ENCODE measurements at regions of chr11 and their contacts with region 1.

Region 1: GRCh38 chr11:130002846-130003716 is 446 bp upstream of the PRDM10 start:
- DNase-seq: peak; percentile 97
- H3K4me3 Mint-ChIP-seq: peak overlapping the region; percentile 97
- H3K27ac Mint-ChIP-seq: peak overlapping the region; percentile 100
- H3K4me1 Mint-ChIP-seq: peaks cover 12% of the 10 kb centered on the region
- H3K27me3 Mint-ChIP-seq: no peaks in the 10 kb centered on the region
- CTCF ChIP-seq: no peak

Region 2: DNA sequence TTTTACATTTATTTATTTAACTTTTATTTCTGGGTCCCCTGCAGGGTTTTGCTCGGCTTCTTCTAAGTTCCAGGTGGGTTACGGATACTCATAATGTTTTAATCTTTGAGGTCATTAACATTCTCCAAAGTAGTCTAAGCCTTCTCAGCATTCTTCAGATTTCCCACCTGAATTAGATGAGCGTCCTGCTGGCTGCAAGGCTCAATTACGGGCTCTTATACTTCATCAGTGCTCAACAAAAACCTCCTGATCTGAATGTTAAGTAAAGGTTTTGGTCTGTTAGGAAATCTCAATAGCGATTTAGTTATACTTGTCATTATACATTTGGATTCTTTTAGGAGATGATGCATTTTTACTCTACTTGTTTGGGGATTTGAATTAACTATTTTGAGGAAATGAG is 80.4 kb before region 1 on chr11:
- CTCF ChIA-PET with region 1: interaction called, 3 read pairs
- POLR2A ChIA-PET with region 1: no interaction called
- intact Hi-C with region 1: loop called (anchors 1 kb)
- DNase-seq: no peak
- H3K4me3 Mint-ChIP-seq: no peak overlapping the region
- H3K27ac Mint-ChIP-seq: no peak overlapping the region
- H3K4me1 Mint-ChIP-seq: peaks cover 5% of the 10 kb centered on the region
- H3K27me3 Mint-ChIP-seq: no peaks in the 10 kb centered on the region
- CTCF ChIP-seq: no peak

Region 3: DNA sequence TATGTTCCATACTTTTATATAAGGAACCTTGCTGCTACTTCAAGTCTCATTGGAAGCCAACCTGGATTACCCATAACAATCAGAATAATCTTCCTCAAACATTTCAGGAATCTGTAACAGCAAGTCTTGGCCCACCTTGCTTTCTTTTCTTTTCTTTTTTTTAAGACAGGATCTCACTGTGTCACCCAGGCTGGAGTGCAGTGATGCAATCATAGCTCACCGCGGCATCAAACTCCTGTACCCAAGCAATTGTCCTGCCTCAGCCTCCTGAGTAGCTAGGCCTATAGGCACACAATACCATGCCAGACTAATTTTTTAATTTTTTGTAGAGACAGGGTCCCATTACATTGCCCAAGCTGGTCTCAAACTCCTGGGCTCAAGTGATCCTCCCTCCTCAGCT is 28.9 kb after region 1 on chr11:
- CTCF ChIA-PET with region 1: interaction called, 4 read pairs
- POLR2A ChIA-PET with region 1: interaction called, 48 read pairs
- intact Hi-C with region 1: loop called (anchors 1 kb)
- DNase-seq: no peak
- H3K4me3 Mint-ChIP-seq: no peak overlapping the region
- H3K27ac Mint-ChIP-seq: peak overlapping the region; percentile 51
- H3K4me1 Mint-ChIP-seq: peaks cover 11% of the 10 kb centered on the region
- H3K27me3 Mint-ChIP-seq: no peaks in the 10 kb centered on the region
- CTCF ChIP-seq: no peak

Region 4: GRCh38 chr11:130069684-130070108 is 66.6 kb after region 1 on chr11 and contains the start of gene APLP2:
- CTCF ChIA-PET with region 1: interaction called, 24 read pairs
- POLR2A ChIA-PET with region 1: interaction called, 186 read pairs
- intact Hi-C with region 1: loop called (anchors 1 kb)
- DNase-seq: peak; percentile 99
- H3K4me3 Mint-ChIP-seq: peak within 1 kb of the TSS; percentile 85
- H3K27ac Mint-ChIP-seq: peak within 1 kb of the TSS; percentile 92
- H3K4me1 Mint-ChIP-seq: peaks cover 25% of the 10 kb centered on the region
- H3K27me3 Mint-ChIP-seq: no peaks in the 10 kb centered on the region
- CTCF ChIP-seq: no peak
- total RNA-seq, gene APLP2: 317 and 368 TPM in 2 replicates

Region 5: DNA sequence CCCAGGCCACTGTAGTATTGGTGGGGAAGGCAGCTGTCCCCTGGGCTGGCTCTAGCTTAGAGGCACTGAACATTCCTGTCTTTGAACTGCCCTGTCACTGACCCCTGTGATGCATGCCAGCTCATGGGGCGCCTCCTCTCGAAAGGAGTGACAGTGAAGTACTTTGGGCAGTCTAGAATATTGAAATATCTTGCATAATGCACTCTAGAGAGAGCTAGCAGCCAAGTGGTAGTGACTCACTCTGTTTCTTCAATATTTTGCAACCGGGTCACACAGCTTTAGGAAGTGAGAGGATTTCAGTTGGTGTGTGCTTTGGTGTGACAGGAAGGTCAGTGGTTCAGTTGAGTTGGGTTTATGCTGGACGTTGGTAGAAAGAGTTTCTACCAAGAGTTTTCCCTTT is 121.0 kb after region 1 on chr11:
- CTCF ChIA-PET with region 1: interaction called, 12 read pairs
- POLR2A ChIA-PET with region 1: interaction called, 79 read pairs
- intact Hi-C with region 1: loop called (anchors 1 kb)
- DNase-seq: peak; percentile 95
- H3K4me3 Mint-ChIP-seq: peak overlapping the region; percentile 30
- H3K27ac Mint-ChIP-seq: peak overlapping the region; percentile 49
- H3K4me1 Mint-ChIP-seq: peaks cover 25% of the 10 kb centered on the region
- H3K27me3 Mint-ChIP-seq: no peaks in the 10 kb centered on the region
- CTCF ChIP-seq: no peak

Region 6: DNA sequence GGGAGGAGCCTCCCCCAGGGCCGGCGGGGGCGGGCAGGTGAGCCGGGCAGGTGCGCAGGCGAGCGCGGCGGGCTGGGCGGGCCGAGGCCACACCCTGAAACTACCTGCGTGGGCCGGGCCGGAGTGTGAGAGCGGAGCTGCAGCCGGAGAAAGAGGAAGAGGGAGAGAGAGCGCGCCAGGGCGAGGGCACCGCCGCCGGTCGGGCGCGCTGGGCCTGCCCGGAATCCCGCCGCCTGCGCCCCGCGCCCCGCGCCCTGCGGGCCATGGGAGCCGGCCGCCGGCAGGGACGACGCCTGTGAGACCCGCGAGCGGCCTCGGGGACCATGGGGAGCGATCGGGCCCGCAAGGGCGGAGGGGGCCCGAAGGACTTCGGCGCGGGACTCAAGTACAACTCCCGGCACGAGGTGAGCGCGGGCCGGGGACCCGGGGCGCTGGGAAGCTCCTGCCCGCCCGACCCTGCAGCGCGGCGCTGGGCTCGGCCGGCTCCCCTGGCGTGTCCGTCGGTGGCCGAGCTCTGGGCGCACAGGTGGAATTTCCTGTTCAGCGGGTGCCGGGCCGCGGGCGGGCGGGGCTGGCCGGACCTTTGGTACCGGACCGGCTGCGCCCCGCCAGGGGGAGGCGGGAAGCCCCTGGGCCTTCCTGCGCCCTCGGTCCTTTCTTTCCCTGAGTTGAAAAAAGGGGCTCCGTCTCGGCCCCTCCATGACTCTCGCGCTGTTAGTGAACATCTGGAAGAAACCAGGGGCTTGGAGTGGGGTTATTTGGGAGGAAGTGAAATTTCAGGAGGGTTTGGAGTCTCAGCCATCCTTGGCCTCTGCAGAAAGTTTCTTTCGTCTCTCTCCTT is 156.8 kb after region 1 on chr11 and contains the start of gene ST14:
- CTCF ChIA-PET with region 1: interaction called, 3 read pairs
- POLR2A ChIA-PET with region 1: interaction called, 11 read pairs
- intact Hi-C with region 1: no loop called
- DNase-seq: peak; percentile 79
- H3K4me3 Mint-ChIP-seq: peak within 1 kb of the TSS; percentile 76
- H3K27ac Mint-ChIP-seq: peak within 1 kb of the TSS; percentile 63
- H3K4me1 Mint-ChIP-seq: peaks cover 30% of the 10 kb centered on the region
- H3K27me3 Mint-ChIP-seq: peaks cover 17% of the 10 kb centered on the region
- CTCF ChIP-seq: no peak
- total RNA-seq, gene ST14: 24.8 and 27.2 TPM in 2 replicates